A673 (cell line): ENCODE measurements at regions of chr20 and their contacts with region 1.

Region 1: GRCh38 chr20:13771853-13772453 is 12.8 kb downstream of the ESF1 start:
- DNase-seq: peak; percentile 77
- H3K4me3 ChIP-seq: no peak overlapping the region
- H3K27ac ChIP-seq: peak overlapping the region; percentile 67
- H3K4me1 ChIP-seq: peaks cover 23% of the 10 kb centered on the region
- H3K27me3 ChIP-seq: no peaks in the 10 kb centered on the region
- CTCF ChIP-seq: peak; percentile 59; the same call in 1 of the 2 replicates

Region 2: GRCh38 chr20:11936157-11936556 is 1835.8 kb before region 1 on chr20:
- CTCF ChIA-PET with region 1: interaction called, 13 read pairs
- POLR2A ChIA-PET with region 1: no interaction called
- intact Hi-C with region 1: no loop called
- DNase-seq: peak; percentile 4
- H3K4me3 ChIP-seq: no peak overlapping the region
- H3K27ac ChIP-seq: no peak overlapping the region
- H3K4me1 ChIP-seq: no peaks in the 10 kb centered on the region
- H3K27me3 ChIP-seq: no peaks in the 10 kb centered on the region
- CTCF ChIP-seq: no peak

Region 3: GRCh38 chr20:12970372-12970821 is 801.6 kb before region 1 on chr20:
- CTCF ChIA-PET with region 1: no interaction called
- POLR2A ChIA-PET with region 1: no interaction called
- intact Hi-C with region 1: loop called (anchors 5 kb)
- DNase-seq: peak; percentile 50
- H3K4me3 ChIP-seq: no peak overlapping the region
- H3K27ac ChIP-seq: no peak overlapping the region
- H3K4me1 ChIP-seq: no peaks in the 10 kb centered on the region
- H3K27me3 ChIP-seq: no peaks in the 10 kb centered on the region
- CTCF ChIP-seq: peak; percentile 58

Region 4: DNA sequence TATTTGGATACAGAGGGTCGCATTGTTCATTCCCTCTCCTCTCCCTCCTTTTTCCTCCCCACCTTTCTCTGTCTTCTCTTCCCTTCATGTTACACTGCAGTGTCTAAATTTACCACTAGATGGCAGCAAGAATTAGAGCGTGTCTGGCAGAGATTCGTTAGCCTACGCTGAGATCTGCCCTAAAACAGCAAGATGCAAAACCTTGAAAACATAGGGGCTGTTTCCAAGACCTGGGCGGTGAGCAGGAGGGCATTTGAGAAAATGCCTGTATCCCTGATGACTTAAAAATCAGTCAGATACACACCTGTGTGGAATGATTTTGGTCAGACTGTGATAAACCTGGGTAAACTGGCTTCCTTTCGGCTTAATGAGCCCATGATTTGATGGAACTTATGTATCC is 652.4 kb before region 1 on chr20:
- CTCF ChIA-PET with region 1: no interaction called
- POLR2A ChIA-PET with region 1: interaction called, 11 read pairs
- intact Hi-C with region 1: loop called (anchors 1 kb)
- DNase-seq: peak; percentile 80
- H3K4me3 ChIP-seq: no peak overlapping the region
- H3K27ac ChIP-seq: no peak overlapping the region
- H3K4me1 ChIP-seq: no peaks in the 10 kb centered on the region
- H3K27me3 ChIP-seq: no peaks in the 10 kb centered on the region
- CTCF ChIP-seq: peak; percentile 93

Region 5: GRCh38 chr20:13325033-13325432 is 446.9 kb before region 1 on chr20:
- CTCF ChIA-PET with region 1: interaction called, 6 read pairs
- POLR2A ChIA-PET with region 1: no interaction called
- intact Hi-C with region 1: loop called (anchors 10 kb)
- DNase-seq: peak; percentile 67
- H3K4me3 ChIP-seq: no peak overlapping the region
- H3K27ac ChIP-seq: no peak overlapping the region
- H3K4me1 ChIP-seq: no peaks in the 10 kb centered on the region
- H3K27me3 ChIP-seq: no peaks in the 10 kb centered on the region
- CTCF ChIP-seq: peak; percentile 66

Region 6: GRCh38 chr20:13458860-13459451 is 313.0 kb before region 1 on chr20:
- CTCF ChIA-PET with region 1: no interaction called
- POLR2A ChIA-PET with region 1: no interaction called
- intact Hi-C with region 1: loop called (anchors 10 kb)
- DNase-seq: peak; percentile 63
- H3K4me3 ChIP-seq: no peak overlapping the region
- H3K27ac ChIP-seq: no peak overlapping the region
- H3K4me1 ChIP-seq: peaks cover 7% of the 10 kb centered on the region
- H3K27me3 ChIP-seq: no peaks in the 10 kb centered on the region
- CTCF ChIP-seq: peak; percentile 81

Region 7: GRCh38 chr20:13587370-13587769 is 184.6 kb before region 1 on chr20:
- CTCF ChIA-PET with region 1: interaction called, 11 read pairs
- POLR2A ChIA-PET with region 1: no interaction called
- intact Hi-C with region 1: no loop called
- DNase-seq: no peak
- H3K4me3 ChIP-seq: no peak overlapping the region
- H3K27ac ChIP-seq: peak overlapping the region; percentile 90
- H3K4me1 ChIP-seq: peaks cover 21% of the 10 kb centered on the region
- H3K27me3 ChIP-seq: no peaks in the 10 kb centered on the region
- CTCF ChIP-seq: no peak